ENCODE measurements at regions of chr16 and their contacts with region 1.

Region 1: GRCh38 chr16:11139326-11140097 is 116.5 kb downstream of the SOCS1 start:
- DNase-seq: no peak
- H3K4me3 ChIP-seq: no peak overlapping the region
- H3K27ac ChIP-seq: peak overlapping the region; percentile 33
- H3K4me1 ChIP-seq: peaks cover 36% of the 10 kb centered on the region
- H3K27me3 ChIP-seq: no peaks in the 10 kb centered on the region
- CTCF ChIP-seq: no peak
- POLR2A ChIP-seq: no peak

Region 2: DNA sequence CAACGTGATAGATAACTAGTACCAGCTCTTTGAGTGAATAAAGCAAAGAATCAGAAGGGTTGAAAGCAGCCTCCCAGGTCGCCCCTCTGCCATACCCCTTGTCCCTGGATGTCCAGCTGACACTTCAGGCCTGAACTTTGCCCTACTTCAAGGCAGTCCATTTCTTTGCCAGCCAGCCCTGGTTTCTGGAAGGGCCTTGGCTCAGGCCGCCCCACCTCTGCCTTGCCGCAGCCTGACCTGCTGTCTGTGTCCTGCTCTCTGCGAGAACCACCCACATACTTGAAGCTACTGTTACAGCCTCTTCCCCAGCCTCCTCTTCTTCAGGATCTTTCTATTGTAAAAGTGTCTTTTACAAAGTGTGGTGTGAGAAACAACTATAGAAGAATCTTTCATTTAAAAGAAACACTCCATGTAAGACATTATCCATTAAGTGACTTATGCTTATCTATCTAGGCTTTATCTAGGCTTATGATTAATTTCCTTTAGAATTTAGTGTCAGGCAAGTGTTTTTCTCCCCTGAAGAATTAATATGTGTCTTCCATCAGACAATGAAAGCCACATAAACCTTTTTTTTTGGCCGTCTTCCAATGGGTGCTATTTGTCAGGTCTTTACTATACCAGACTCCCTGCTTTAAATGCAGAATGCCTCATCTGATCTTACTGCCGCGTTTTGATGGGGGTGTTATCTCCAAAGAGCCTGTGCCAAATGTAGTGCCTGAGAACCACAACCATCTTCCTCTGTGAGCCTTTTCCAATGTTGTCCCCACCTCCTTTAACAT is 17.4 kb before region 1 on chr16:
- CTCF ChIA-PET with region 1: no interaction called
- POLR2A ChIA-PET with region 1: interaction called, 10 read pairs
- dilution Hi-C with region 1: no loop called
- intact Hi-C with region 1: no loop called
- DNase-seq: peak; percentile 51
- H3K4me3 ChIP-seq: no peak overlapping the region
- H3K27ac ChIP-seq: peak overlapping the region; percentile 38
- H3K4me1 ChIP-seq: peaks cover 20% of the 10 kb centered on the region
- H3K27me3 ChIP-seq: no peaks in the 10 kb centered on the region
- CTCF ChIP-seq: no peak
- POLR2A ChIP-seq: no peak